Activated T-helper 1 cell treated with anti-CD3 and anti-CD28 coated beads, Interleukin-12 subunit alpha, Interleukin-12 subunit beta, Interleukin-2, Interleukin-4 antibody, amounts not matched to agents 30 ng/mL and 10 ng/mL and 1 ng/mL, durations not matched to agents 14 hours and 24 hours and 36 hours (primary cell): ENCODE measurements at regions of chr13 and their contacts with region 1.

Region 1: DNA sequence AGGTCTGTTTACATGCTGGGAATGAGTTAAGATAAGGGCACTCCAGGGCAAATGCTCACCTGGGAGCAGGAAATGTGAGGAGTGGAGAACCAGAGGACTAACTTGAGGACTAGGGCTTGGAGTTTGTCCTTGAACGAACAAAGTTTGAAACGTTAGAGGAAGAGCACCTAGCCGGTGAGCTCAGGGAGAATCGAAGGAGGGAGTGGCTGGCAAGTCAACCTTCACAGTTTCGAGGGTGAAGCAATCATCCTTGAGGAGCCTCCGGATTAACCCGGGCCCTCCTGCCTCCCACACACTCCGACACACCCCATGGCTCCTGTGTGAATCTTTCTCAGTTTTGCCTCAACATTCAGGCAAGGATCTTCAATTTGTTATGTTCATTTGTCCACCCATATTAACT is 58.6 kb downstream of the LMO7 start:
- DNase-seq: no peak
- H3K4me3 Mint-ChIP-seq: no peak overlapping the region
- H3K27ac Mint-ChIP-seq: no peak overlapping the region
- H3K4me1 Mint-ChIP-seq: no peaks in the 10 kb centered on the region
- H3K27me3 Mint-ChIP-seq: peaks cover 3% of the 10 kb centered on the region

Region 2: GRCh38 chr13:75803164-75803611 is 108.5 kb after region 1 on chr13:
- intact Hi-C with region 1: loop called (anchors 5 kb)
- DNase-seq: no peak
- H3K4me3 Mint-ChIP-seq: no peak overlapping the region
- H3K27ac Mint-ChIP-seq: peak overlapping the region; percentile 2
- H3K4me1 Mint-ChIP-seq: peaks cover 41% of the 10 kb centered on the region
- H3K27me3 Mint-ChIP-seq: no peaks in the 10 kb centered on the region

Region 3: GRCh38 chr13:75870397-75870903 is 175.7 kb after region 1 on chr13:
- intact Hi-C with region 1: loop called (anchors 1 kb)
- DNase-seq: no peak
- H3K4me3 Mint-ChIP-seq: peak overlapping the region; percentile 53
- H3K27ac Mint-ChIP-seq: no peak overlapping the region
- H3K4me1 Mint-ChIP-seq: peaks cover 18% of the 10 kb centered on the region
- H3K27me3 Mint-ChIP-seq: peaks cover 3% of the 10 kb centered on the region

Region 4: DNA sequence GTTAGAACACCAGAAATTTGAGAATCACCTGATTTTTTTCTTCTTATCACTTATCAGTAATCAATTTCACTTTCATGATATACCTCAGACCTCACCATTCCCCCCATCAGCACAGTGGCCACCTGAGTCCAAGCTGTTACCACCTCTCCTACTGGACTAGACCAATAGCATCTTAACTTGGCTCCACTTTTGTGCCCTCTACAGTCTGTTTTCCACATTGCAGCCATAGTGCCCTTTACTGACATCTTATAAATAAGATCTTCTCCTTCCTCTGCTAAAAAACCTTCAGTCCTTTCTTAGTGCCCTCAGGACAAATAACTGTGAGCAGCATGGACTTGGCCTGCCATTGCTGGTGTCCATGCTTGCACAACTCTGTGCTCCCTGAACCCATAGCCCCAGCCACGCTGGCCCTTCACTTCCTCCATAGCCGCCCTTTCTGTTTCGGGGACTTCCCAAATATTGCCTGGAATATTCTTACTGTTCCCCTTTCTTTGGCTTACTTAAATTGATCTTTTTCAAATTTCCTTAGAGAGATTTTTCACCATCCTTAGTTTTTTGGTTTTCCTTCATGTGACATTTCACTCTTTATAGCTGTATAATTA is 322.2 kb after region 1 on chr13:
- intact Hi-C with region 1: loop called (anchors 1 kb)
- DNase-seq: no peak
- H3K4me3 Mint-ChIP-seq: no peak overlapping the region
- H3K27ac Mint-ChIP-seq: no peak overlapping the region
- H3K4me1 Mint-ChIP-seq: no peaks in the 10 kb centered on the region
- H3K27me3 Mint-ChIP-seq: no peaks in the 10 kb centered on the region

Region 5: GRCh38 chr13:76886292-76887075 is 1191.8 kb after region 1 on chr13 and contains the start of gene KCTD12:
- intact Hi-C with region 1: loop called (anchors 5 kb)
- DNase-seq: peak; percentile 60
- H3K4me3 Mint-ChIP-seq: peak within 1 kb of the TSS; percentile 90
- H3K27ac Mint-ChIP-seq: peak within 1 kb of the TSS; percentile 85
- H3K4me1 Mint-ChIP-seq: peaks cover 28% of the 10 kb centered on the region
- H3K27me3 Mint-ChIP-seq: peaks cover 28% of the 10 kb centered on the region
- total RNA-seq, gene KCTD12: 10.4 and 10.7 TPM in 2 replicates

Region 6: DNA sequence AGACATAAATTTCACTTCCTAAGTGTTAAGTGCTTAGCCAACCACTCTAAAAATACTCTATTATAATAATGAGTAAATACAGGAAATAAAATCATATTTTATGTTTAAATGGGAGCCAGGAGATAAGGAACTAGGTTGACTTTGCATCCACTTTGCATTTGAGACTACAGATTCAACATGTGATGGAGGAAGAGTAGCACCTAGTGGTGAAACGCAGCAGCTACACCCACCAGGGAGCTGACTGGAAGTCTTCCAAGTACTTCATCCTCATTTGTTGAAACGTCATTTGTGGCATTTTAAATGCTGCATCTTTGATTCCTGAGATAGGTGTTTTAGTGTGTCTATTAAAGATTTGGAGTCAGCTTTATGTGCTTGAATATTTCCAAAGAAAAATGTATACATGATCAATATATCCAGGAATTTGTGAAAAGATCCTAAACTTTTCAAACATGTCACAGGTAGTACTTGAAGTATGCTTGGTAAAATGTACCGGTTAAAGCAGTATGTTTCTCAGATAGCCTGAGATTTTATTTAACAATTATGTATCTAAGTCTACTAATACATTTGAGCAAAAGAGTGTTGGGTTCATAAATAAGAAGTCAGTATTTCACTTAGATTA is 1208.9 kb after region 1 on chr13:
- intact Hi-C with region 1: loop called (anchors 1 kb)
- DNase-seq: peak; percentile 50
- H3K4me3 Mint-ChIP-seq: no peak overlapping the region
- H3K27ac Mint-ChIP-seq: no peak overlapping the region
- H3K4me1 Mint-ChIP-seq: no peaks in the 10 kb centered on the region
- H3K27me3 Mint-ChIP-seq: peaks cover 24% of the 10 kb centered on the region